Activated CD4-positive, alpha-beta T cell treated with anti-CD3 and anti-CD28 coated beads, Interleukin-2, amount 10 ng/mL, durations not matched to agents 24 days and 14 days (primary cell): ENCODE measurements at regions of chr12 and their contacts with region 1.

Region 1: DNA sequence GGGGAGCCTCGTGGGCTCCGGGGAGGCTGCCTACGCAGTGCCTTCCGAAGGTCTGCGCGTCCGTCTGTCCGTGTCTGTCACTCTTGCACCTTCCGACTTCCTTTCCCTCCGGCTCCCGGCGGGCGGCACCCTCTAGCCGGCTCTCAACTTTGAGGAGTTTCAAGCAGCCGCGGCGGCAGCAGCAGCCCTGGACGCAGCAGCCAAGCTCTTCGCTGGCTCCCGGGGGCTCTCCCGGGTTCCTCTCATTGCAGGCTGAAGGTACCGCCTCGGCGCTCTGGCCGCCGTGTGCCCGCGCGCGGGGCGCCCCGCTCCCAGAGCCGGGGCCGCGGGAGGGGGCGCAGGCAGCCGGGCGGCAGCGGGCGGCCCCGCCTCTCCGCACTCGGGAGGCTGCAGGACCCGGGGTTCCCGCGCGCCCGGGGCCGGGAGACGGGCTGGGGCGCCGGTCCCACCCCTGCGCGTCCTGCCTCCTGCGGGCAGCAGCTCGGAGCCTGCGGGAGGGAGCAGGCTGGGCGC is at the starts of genes AMIGO2 and PCED1B:
- DNase-seq: peak; percentile 90
- H3K4me3 Mint-ChIP-seq: peak within 1 kb of the TSS; percentile 98
- H3K27ac Mint-ChIP-seq: peak within 1 kb of the TSS; percentile 99
- H3K4me1 Mint-ChIP-seq: peaks cover 63% of the 10 kb centered on the region
- H3K27me3 Mint-ChIP-seq: no peaks in the 10 kb centered on the region
- total RNA-seq, gene AMIGO2: 13.6 and 14.4 TPM in 2 replicates
- total RNA-seq, gene PCED1B: 51.7 and 55.2 TPM in 2 replicates

Region 2: DNA sequence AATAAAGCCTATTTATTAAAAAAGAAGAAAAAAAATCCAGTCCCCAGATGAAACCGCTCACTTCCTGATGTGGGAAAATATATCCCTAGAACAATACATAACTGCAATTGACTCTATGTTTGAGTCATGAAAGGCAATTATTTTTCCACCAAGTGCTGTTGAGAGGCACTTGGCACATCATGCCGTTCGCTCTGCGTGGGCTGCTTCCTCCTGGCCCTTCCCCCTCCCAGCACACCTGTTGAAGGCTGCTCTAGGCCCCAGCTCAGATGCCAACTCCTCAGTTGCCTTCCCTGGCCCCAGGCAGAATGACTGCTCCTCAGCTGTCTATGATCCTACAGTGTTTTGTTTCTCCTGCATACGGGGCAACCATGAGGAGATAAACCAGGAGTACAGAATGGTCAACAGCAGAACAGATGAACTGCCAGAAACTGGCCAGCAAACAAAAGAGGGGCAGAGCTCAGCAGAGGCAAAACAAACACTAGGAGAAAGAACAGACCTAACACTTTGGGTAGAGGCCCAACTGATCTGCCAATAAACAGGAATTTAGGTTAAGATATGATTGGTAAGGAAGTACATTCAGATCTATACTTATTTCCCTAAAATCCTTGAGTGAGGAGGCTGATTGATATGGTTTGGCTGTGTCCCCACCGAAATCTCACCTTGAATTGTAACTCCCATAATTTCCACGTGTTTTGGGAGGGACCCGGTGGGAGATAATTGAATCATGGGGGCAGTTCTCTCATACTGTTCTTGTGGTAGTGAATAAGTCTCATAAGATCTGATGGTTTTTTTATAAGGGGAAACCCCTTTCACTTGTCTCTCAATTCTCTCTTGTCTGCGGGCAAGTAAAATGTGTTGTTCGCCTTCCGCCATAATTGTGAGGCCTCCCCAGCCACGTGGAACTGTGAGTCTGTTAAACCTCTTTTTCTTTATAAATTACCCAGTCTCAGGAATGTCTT is 869.3 kb before region 1 on chr12:
- intact Hi-C with region 1: loop called (anchors 10 kb)
- DNase-seq: peak; percentile 79
- H3K4me3 Mint-ChIP-seq: peak overlapping the region; percentile 65
- H3K27ac Mint-ChIP-seq: peak overlapping the region; percentile 94
- H3K4me1 Mint-ChIP-seq: peaks cover 69% of the 10 kb centered on the region
- H3K27me3 Mint-ChIP-seq: no peaks in the 10 kb centered on the region

Region 3: GRCh38 chr12:47121146-47121545 is 41.6 kb after region 1 on chr12:
- intact Hi-C with region 1: loop called (anchors 5 kb)
- DNase-seq: no peak
- H3K4me3 Mint-ChIP-seq: no peak overlapping the region
- H3K27ac Mint-ChIP-seq: peak overlapping the region; percentile 92
- H3K4me1 Mint-ChIP-seq: peaks cover 9% of the 10 kb centered on the region
- H3K27me3 Mint-ChIP-seq: no peaks in the 10 kb centered on the region

Region 4: DNA sequence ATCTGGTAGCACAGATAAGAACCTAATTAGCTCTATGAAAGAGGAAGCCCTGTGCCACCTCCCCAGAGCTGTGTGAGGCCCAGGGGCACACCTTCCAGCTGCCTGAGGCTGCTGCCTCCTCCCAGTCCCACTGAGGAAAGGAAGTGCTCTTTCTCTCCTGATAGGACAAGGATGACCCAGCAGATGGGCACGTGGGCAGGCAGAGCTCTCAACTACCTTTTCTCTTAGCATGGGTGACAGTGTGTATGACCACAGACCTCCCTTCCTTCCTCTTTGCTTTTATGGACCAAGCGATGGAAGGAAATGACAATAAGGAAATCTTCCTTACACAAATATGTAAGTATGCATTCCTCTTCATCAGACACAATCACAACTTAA is 127.8 kb after region 1 on chr12:
- intact Hi-C with region 1: loop called (anchors 2 kb)
- DNase-seq: peak; percentile 80
- H3K4me3 Mint-ChIP-seq: peak overlapping the region; percentile 79
- H3K27ac Mint-ChIP-seq: peak overlapping the region; percentile 18
- H3K4me1 Mint-ChIP-seq: peaks cover 63% of the 10 kb centered on the region
- H3K27me3 Mint-ChIP-seq: no peaks in the 10 kb centered on the region

Region 5: GRCh38 chr12:47356129-47356700 is 276.7 kb after region 1 on chr12:
- intact Hi-C with region 1: loop called (anchors 2 kb)
- DNase-seq: peak; percentile 71
- H3K4me3 Mint-ChIP-seq: peak overlapping the region; percentile 63
- H3K27ac Mint-ChIP-seq: peak overlapping the region; percentile 98
- H3K4me1 Mint-ChIP-seq: peaks cover 69% of the 10 kb centered on the region
- H3K27me3 Mint-ChIP-seq: no peaks in the 10 kb centered on the region

Region 6: GRCh38 chr12:47576289-47576945 is 496.9 kb after region 1 on chr12:
- intact Hi-C with region 1: loop called (anchors 5 kb)
- DNase-seq: no peak
- H3K4me3 Mint-ChIP-seq: no peak overlapping the region
- H3K27ac Mint-ChIP-seq: no peak overlapping the region
- H3K4me1 Mint-ChIP-seq: peaks cover 18% of the 10 kb centered on the region
- H3K27me3 Mint-ChIP-seq: no peaks in the 10 kb centered on the region